Endothelial cell of umbilical vein (primary cell): ENCODE measurements at regions of chr1 and their contacts with region 1.

Region 1: DNA sequence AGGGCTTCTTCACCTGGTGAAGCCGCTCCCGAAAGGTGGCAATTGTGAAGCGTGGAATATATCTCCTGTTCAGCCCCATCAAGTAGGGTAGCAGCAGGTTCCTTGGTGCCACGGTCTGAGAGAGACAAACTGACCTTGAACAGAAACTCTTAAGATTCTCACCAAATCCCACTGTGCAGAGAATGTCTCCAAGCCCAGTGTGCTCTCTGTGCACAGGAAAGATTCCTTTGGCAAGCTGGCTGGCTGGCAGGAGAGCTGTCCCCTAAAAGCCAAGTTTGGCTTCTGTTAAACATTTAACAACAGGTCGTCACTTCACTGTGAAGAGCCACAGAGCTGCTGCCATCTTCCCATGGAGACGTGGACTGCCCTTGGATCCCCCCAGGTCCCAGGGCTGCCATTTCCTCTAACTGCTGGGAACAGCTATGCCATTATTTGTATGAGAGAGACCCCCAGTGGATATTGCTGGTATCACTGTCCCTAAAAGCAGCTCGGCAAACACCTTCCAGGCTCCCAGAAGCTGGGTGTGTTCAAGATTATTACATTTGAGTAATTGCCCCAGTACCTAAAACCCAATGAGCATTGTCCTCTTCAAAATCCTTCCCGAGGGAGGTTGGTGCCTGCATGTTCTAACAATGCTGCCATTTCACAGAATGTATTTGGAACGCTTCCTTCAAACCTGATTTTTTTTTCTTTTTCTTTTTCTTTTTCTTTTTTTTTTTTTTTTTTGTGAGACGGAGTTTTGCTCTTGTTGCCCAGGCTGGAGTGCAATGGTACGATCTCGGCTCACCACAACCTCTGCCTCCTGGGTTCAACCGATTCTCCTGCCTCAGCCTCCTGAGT is 71.8 kb downstream of the CD58 start:
- DNase-seq: peak; percentile 77
- H3K4me3 ChIP-seq: no peak overlapping the region
- H3K27ac ChIP-seq: no peak overlapping the region
- H3K4me1 ChIP-seq: peaks cover 5% of the 10 kb centered on the region
- H3K27me3 ChIP-seq: no peaks in the 10 kb centered on the region
- CTCF ChIP-seq: peak; percentile 70 to 84
- POLR2A ChIP-seq: no peak

Region 2: GRCh38 chr1:115717541-115717940 is 781.5 kb before region 1 on chr1:
- CTCF ChIA-PET with region 1: interaction called, 10 read pairs
- POLR2A ChIA-PET with region 1: no interaction called
- dilution Hi-C with region 1: no loop called
- intact Hi-C with region 1: no loop called
- DNase-seq: peak; percentile 30
- H3K4me3 ChIP-seq: no peak overlapping the region
- H3K27ac ChIP-seq: no peak overlapping the region
- H3K4me1 ChIP-seq: no peaks in the 10 kb centered on the region
- H3K27me3 ChIP-seq: peaks cover 2 to 16% of the 10 kb centered on the region in 2 experiments
- CTCF ChIP-seq: peak; percentile 41 to 56
- POLR2A ChIP-seq: no peak

Region 3: DNA sequence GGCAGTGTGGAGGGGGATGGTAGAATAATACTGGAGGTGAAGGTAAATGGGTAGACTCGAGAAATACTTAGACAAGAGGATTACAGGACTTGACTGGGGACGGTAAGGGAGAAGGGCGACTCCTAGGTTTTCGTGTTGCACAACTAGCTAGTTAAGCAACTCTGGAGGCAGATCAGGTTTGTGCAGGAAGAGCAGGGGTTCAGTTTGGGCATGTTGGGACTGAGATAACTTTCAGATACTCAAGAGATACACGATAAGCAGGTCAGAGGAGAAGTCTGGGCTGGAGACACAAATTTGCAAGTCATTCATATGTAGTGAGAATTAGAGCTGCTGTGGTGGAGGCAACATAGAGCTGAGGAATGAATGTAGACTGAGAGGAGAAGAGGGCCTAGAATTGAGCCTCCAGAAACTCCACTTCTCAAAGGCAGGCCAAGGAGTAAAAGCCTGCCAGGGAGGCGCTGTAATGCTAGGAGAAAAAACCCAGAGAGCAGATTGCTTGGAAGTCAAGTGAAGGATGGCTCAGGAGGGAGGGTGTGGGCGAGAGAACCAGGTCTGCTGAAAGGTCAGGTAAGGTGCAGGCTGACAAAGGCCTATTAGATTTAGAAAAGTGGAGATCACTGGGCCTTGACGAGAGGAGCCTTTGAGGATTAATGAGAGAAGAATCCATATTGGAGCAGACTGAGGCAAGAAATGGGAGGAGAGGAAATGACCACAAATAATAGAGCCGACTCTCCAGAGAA is 367.0 kb before region 1 on chr1:
- CTCF ChIA-PET with region 1: interaction called, 13 read pairs
- POLR2A ChIA-PET with region 1: no interaction called
- dilution Hi-C with region 1: no loop called
- intact Hi-C with region 1: no loop called
- DNase-seq: no peak
- H3K4me3 ChIP-seq: no peak overlapping the region
- H3K27ac ChIP-seq: no peak overlapping the region
- H3K4me1 ChIP-seq: no peaks in the 10 kb centered on the region
- H3K27me3 ChIP-seq: peaks cover 4 to 10% of the 10 kb centered on the region in 2 experiments
- CTCF ChIP-seq: no peak
- POLR2A ChIP-seq: no peak

Region 4: DNA sequence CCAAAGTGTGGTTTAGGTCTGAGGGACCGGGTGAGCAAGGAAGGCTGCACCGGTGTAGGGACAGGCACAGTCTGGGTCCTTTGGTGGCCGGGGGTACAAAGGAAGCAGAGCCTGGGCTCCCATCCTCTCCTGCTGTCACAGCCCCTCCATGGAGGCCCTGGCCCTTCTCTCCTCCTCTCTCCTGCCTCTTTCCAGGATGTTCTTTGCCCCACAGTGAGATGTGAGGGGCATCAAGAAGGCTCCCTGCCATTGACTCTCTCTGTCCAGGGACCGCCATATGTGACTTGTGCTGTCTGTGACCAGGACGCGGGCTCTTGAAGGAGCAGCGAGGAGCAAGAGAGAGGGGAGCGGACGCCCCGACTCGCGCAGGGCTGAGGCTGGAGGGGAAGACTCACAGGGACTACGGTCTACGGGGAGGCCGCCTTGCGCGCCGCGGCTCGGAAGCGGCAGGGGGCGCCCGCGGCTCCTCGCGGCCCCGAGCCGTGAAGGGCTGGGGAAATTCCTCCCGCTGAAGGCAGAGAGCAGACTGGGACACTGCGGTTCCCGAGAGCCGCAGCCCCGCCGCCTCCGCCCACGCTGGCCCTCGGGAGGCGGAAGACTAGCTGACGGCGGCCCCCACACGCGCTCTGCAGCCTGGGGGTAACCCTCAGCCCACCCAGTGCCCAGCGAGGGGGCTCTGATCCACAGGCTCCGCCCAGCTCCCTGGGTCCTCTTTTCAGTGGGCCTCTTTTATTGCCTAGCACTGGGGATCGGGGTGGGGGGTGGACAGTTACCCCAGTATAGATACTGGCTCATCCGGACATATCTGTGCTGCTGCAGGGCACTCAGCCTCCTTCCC is 347.1 kb before region 1 on chr1:
- CTCF ChIA-PET with region 1: interaction called, 93 read pairs
- POLR2A ChIA-PET with region 1: no interaction called
- dilution Hi-C with region 1: no loop called
- intact Hi-C with region 1: loop called (anchors 1 kb)
- DNase-seq: peak; percentile 78
- H3K4me3 ChIP-seq: peak overlapping the region; percentile 34 to 42 (median 37)
- H3K27ac ChIP-seq: peak overlapping the region; percentile 84
- H3K4me1 ChIP-seq: peaks cover 16% of the 10 kb centered on the region
- H3K27me3 ChIP-seq: peaks cover 5 to 9% of the 10 kb centered on the region in 2 experiments
- CTCF ChIP-seq: peak; percentile 88 to 90
- POLR2A ChIP-seq: no peak

Region 5: DNA sequence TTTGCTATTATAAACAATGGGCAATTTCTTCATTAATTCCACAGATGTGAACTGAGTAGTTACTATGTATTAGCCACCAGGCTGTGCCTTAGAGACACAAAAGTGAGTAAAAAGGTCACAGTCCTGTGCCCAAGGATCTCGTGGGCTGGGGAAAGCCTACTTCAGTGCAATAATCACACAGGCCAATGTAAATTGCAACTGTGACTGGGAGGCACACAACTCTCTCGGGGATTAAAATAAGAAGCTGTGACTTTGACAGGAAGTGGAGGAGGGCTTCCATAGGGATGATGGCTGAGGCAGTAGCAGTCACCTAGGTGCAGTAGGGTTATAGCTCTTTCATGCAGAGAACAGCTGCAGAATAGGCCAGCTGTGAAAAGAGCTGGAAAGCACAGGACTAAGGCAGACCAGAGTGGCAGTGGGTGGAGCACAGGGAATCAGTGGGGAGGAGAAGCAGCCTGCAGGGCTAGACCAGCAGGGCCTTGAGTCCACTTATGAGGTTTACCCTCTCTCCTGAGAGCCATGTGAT is 266.0 kb before region 1 on chr1:
- CTCF ChIA-PET with region 1: no interaction called
- POLR2A ChIA-PET with region 1: no interaction called
- dilution Hi-C with region 1: no loop called
- intact Hi-C with region 1: loop called (anchors 5 kb)
- DNase-seq: no peak
- H3K4me3 ChIP-seq: no peak overlapping the region
- H3K27ac ChIP-seq: no peak overlapping the region
- H3K4me1 ChIP-seq: no peaks in the 10 kb centered on the region
- H3K27me3 ChIP-seq: peaks cover 2 to 3% of the 10 kb centered on the region in 2 experiments
- CTCF ChIP-seq: no peak
- POLR2A ChIP-seq: no peak

Region 6: DNA sequence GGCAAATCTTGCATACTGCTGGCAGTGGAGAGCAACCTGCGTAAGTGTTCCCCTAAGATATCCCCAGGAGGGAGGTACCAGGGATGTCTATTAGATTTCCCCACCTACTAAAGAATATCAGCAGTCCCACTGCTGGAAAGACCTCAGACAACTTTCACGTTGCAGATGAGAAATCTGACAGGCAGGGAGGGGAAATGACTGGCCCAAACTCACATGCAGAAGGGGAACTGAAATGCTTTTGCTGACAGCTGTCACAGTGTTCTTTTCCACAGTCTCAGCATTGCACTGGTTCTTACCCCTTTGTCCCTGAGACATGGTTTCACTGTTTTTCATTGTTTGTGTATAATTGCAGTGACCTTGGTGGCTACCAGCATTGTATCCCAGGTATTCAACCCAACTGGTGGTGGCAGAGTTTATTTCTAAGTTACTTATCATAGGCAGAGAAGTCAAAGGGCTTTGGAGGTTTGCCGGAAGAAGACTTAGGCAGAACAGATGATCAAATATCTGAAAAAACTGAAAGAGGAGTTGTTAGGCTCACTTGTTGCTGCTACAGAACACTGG is 210.7 kb before region 1 on chr1:
- CTCF ChIA-PET with region 1: no interaction called
- POLR2A ChIA-PET with region 1: no interaction called
- dilution Hi-C with region 1: no loop called
- intact Hi-C with region 1: no loop called
- DNase-seq: no peak
- H3K4me3 ChIP-seq: no peak overlapping the region
- H3K27ac ChIP-seq: no peak overlapping the region
- H3K4me1 ChIP-seq: no peaks in the 10 kb centered on the region
- H3K27me3 ChIP-seq: peaks cover 8 to 9% of the 10 kb centered on the region in 2 experiments
- CTCF ChIP-seq: no peak
- POLR2A ChIP-seq: no peak